ENCODE measurements at regions of chr14 and their contacts with region 1.

Region 1: GRCh38 chr14:99320105-99320572 is 48.1 kb upstream of the BCL11B start:
- DNase-seq: peak; percentile 60 to 88
- H3K4me3 ChIP-seq: no peak overlapping the region
- H3K4me1 ChIP-seq: no peaks in the 10 kb centered on the region
- H3K27me3 ChIP-seq: no peaks in the 10 kb centered on the region

Region 2: DNA sequence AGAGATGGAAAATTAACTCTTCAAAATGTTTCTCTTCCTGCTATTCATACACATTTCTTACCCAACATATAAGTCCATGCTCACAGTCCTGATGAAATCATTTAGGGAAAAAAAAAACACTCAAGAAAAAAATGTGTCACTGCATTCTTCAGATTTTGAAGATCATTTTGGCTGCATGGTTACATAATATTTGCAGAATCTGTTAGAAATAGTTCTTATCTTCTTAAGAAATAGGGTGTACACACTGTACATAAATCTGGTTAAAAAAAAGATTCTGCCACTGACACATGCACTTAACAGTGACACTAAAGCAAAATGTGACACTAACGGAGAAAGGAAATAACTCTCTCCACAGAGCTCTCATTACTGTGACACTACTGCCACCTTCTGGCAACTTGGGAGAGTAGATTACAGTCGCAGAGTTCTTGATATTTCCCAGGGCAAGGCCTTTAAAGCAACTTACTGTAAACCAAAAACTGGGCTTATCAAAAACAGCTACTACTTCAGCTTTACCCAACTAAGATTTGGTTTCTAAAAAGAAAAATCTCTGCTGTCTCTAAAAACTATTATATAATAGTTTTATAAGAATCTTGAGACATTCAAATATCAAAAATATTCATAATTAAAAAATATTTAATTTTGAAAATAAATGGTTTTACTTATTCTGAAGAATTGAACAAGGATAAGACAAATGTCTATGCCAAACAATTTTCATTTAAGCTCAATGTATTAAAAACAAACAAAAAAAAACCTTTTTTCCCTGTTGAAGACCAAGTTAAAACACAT is 95.5 kb after region 1 on chr14:
- in situ Hi-C with region 1: loop called (anchors 10 kb)
- DNase-seq: peak; percentile 75 to 86
- H3K4me3 ChIP-seq: no peak overlapping the region
- H3K4me1 ChIP-seq: peaks cover 32% of the 10 kb centered on the region
- H3K27me3 ChIP-seq: no peaks in the 10 kb centered on the region